H1 (cell line): ENCODE measurements at regions of chr17 and their contacts with region 1.

Region 1: GRCh38 chr17:75920045-75920560 is 15.4 kb upstream of the MRPL38 start:
- DNase-seq: no peak
- H3K4me3 ChIP-seq: no peak overlapping the region
- H3K27ac ChIP-seq: no peak overlapping the region
- H3K4me1 ChIP-seq: no peaks in the 10 kb centered on the region
- H3K27me3 ChIP-seq: no peaks in the 10 kb centered on the region
- CTCF ChIP-seq: no peak
- EP300 ChIP-seq: no peak
- POLR2A ChIP-seq: no peak
- RAD21 ChIP-seq: no peak

Region 2: GRCh38 chr17:75535119-75535537 is 385.0 kb before region 1 on chr17:
- CTCF ChIA-PET with region 1: no interaction called
- POLR2A ChIA-PET with region 1: no interaction called
- DNase-seq: no peak
- H3K4me3 ChIP-seq: no peak overlapping the region
- H3K27ac ChIP-seq: no peak overlapping the region
- H3K4me1 ChIP-seq: peaks cover 0 to 6% (median 4%) of the 10 kb centered on the region in 4 experiments; a peak in 5 of 7 replicates
- H3K27me3 ChIP-seq: no peaks in the 10 kb centered on the region
- CTCF ChIP-seq: no peak
- EP300 ChIP-seq: no peak
- POLR2A ChIP-seq: no peak
- RAD21 ChIP-seq: no peak

Region 3: DNA sequence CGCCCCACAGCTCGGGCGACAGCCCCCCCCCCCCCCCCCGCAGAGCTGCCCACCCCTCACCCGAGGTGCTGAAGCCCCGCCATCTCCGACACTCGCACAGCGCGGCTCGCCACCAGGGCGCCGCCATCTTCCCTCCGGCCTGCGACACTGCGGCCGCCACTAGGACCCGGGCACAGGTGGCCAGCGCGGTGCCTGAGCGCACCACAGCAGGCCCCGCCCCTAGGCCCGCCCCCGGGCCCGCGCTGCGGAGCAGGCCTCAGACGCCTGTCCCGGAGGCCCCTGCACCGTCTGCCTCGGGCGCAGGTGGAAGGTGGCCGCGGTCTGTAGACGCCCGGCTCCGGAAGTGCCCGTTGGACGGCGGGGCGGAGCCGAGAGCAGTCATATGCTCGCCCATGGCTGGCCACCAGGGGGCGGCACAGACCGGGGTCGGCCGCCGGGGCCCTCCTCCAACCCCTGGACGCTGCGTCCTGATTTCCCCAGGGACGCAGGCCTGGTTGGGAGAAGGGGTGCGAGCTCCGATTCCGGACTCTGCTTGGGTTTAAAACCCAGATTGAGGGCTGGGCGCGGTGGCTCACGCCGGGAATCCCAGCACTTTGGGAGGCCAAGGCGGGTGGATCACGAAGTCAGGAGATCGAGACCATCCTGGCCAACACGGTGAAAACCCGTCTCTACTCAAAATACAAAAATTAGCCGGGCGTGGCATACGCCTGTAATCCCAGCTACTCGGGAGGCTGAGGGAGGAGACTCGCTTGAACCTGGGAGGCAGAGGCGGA is 15.2 kb before region 1 on chr17 and contains the start of gene MRPL38:
- CTCF ChIA-PET with region 1: interaction called, 95 read pairs
- POLR2A ChIA-PET with region 1: interaction called, 16 read pairs
- DNase-seq: peak; percentile 92 to 98
- H3K4me3 ChIP-seq: peak within 1 kb of the TSS; percentile 74 to 97 (median 89)
- H3K27ac ChIP-seq: peak within 1 kb of the TSS; percentile 83; the same call in 1 of the 2 replicates
- H3K4me1 ChIP-seq: no peaks in the 10 kb centered on the region; a peak in 1 of 7 replicates
- H3K27me3 ChIP-seq: no peaks in the 10 kb centered on the region
- CTCF ChIP-seq: peak; percentile 83 to 93 (median 85)
- EP300 ChIP-seq: no peak
- POLR2A ChIP-seq: peak in 1 of 2 experiments; percentile 71; a peak in 1 of 3 replicates
- RAD21 ChIP-seq: peak; percentile 91 to 95
- total RNA-seq, gene MRPL38: 125 and 132 TPM in 2 replicates

Region 4: DNA sequence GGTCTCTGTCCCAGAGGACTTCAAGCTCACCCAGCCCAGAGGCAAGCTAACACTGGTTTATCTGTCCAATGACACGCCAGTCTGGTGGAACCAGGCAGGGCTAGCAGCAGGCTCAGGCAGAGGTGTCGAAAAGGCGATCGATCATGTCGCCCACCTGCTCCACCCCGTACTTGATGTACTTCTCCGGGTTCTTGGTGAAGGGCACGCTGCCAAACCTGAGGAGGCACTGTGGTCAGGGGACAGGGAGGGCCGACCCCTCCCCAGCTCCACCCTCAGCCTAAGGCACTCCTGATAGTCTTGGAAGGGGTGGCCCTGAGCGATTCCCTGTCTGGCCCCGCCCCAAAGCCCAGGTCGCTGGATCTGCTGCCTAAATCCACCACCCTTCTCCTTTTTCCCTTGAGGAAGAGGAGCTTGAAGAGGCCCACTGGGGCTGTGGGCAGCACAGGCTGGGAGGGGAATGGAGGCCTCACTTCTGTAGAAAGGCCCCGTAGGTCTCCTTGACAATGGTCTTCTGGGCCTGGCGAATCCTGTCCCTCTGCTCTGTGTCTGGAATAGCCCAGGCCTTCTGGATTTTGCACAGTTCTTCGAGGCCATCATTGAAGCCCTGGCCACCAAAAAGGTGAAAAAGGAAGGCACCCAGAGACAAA is 163.6 kb after region 1 on chr17:
- CTCF ChIA-PET with region 1: no interaction called
- POLR2A ChIA-PET with region 1: no interaction called
- DNase-seq: no peak
- H3K4me3 ChIP-seq: no peak overlapping the region
- H3K27ac ChIP-seq: no peak overlapping the region
- H3K4me1 ChIP-seq: peaks cover 0 to 26% (median 16%) of the 10 kb centered on the region in 4 experiments; a peak in 6 of 7 replicates
- H3K27me3 ChIP-seq: peaks cover 4 to 15% (median 12%) of the 10 kb centered on the region in 4 experiments; a peak in 6 of 7 replicates
- CTCF ChIP-seq: no peak
- EP300 ChIP-seq: no peak
- POLR2A ChIP-seq: no peak
- RAD21 ChIP-seq: no peak